H1 (cell line): ENCODE measurements at regions of chr1 and their contacts with region 1.

Region 1: DNA sequence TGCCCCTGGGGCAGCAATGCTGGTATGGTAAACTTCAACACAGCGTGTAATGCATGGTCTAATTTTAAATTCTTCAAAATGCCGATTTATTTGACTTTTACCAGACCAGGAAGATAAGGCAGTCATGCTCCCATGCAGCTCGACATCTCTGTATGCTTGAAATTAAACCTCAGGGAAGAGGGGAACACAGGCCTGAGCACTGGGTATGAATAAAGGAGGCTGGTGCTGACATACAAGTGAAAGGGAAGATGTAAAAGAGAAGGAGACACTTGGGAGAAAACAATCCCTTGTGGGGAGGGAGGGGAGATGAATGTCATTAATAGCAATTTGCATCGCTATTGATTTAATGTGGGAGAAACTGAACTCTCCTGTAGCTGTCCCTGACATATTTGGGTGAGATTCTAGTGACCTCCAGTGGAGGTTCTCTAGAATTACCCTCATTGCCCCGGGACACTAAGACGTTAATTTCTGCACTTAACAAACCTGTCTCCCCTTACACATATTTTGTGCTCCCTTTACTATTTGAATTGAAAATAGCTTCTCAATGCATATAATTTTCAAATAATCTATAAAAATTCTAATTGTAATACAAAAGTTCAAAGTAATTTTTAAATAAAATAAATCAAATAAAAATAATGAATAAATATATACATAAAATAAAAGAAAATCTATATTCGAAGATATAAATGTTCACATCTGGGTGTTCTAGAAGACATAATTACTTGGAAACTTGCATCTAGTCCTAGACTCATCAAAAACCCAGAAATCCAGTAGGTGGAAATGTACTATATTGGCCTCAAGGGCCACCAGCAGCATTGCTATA is 283.1 kb downstream of the LMX1A start:
- DNase-seq: no peak
- H3K4me3 ChIP-seq: no peak overlapping the region
- H3K27ac ChIP-seq: no peak overlapping the region
- H3K4me1 ChIP-seq: peaks cover 0 to 9% (median 4%) of the 10 kb centered on the region in 4 experiments; a peak in 3 of 7 replicates
- H3K27me3 ChIP-seq: no peaks in the 10 kb centered on the region; a peak in 1 of 7 replicates
- CTCF ChIP-seq: peak in 2 of 3 experiments; percentile 68 to 73; a peak in 3 of 4 replicates
- EP300 ChIP-seq: no peak
- POLR2A ChIP-seq: no peak
- RAD21 ChIP-seq: peak; percentile 93 to 95

Region 2: GRCh38 chr1:163410073-163410999 is 1663.1 kb before region 1 on chr1:
- CTCF ChIA-PET with region 1: interaction called, 15 read pairs
- POLR2A ChIA-PET with region 1: no interaction called
- DNase-seq: peak; percentile 65 to 83
- H3K4me3 ChIP-seq: peak overlapping the region in 1 of 4 experiments; percentile 39; a peak in 1 of 8 replicates
- H3K27ac ChIP-seq: no peak overlapping the region
- H3K4me1 ChIP-seq: peaks cover 2 to 11% (median 6%) of the 10 kb centered on the region in 4 experiments; a peak in 4 of 7 replicates
- H3K27me3 ChIP-seq: no peaks in the 10 kb centered on the region
- CTCF ChIP-seq: peak in 2 of 3 experiments; percentile 63 to 84; a peak in 3 of 4 replicates
- EP300 ChIP-seq: no peak
- POLR2A ChIP-seq: no peak
- RAD21 ChIP-seq: peak; percentile 89 to 91

Region 3: DNA sequence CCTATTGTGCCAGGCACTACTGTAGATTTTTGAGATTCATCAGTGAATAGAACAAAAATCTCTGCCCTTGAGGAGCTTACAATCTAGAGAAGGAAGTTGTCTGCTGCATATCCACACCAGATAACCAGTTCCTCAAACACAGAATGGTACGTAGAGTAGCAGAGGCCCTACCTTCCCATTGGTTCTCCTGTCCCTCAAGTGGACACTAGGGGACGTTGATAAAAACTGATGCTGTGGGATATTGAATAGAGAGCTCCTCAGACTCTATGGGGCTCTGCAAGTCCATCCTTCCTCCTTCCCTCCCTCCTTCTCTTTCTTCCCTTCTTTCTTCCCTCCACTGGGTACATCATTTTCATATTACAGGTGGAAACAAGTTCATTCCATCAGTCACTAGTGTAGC is 143.2 kb before region 1 on chr1:
- CTCF ChIA-PET with region 1: interaction called, 11 read pairs
- POLR2A ChIA-PET with region 1: no interaction called
- DNase-seq: no peak
- H3K4me3 ChIP-seq: no peak overlapping the region
- H3K27ac ChIP-seq: no peak overlapping the region
- H3K4me1 ChIP-seq: no peaks in the 10 kb centered on the region; a peak in 1 of 7 replicates
- H3K27me3 ChIP-seq: no peaks in the 10 kb centered on the region
- CTCF ChIP-seq: peak in 1 of 3 experiments; percentile 13; a peak in 1 of 4 replicates
- EP300 ChIP-seq: no peak
- POLR2A ChIP-seq: no peak
- RAD21 ChIP-seq: peak in 1 of 2 experiments; percentile 5; a peak in 2 of 4 replicates

Region 4: GRCh38 chr1:165025805-165026204 is 47.6 kb before region 1 on chr1:
- CTCF ChIA-PET with region 1: no interaction called
- POLR2A ChIA-PET with region 1: no interaction called
- DNase-seq: no peak
- H3K4me3 ChIP-seq: no peak overlapping the region
- H3K27ac ChIP-seq: no peak overlapping the region
- H3K4me1 ChIP-seq: no peaks in the 10 kb centered on the region
- H3K27me3 ChIP-seq: no peaks in the 10 kb centered on the region
- CTCF ChIP-seq: no peak
- EP300 ChIP-seq: no peak
- POLR2A ChIP-seq: no peak
- RAD21 ChIP-seq: no peak

Region 5: GRCh38 chr1:165063181-165063965 is 10.0 kb before region 1 on chr1:
- CTCF ChIA-PET with region 1: interaction called, 23 read pairs
- POLR2A ChIA-PET with region 1: no interaction called
- DNase-seq: no peak
- H3K4me3 ChIP-seq: no peak overlapping the region
- H3K27ac ChIP-seq: no peak overlapping the region
- H3K4me1 ChIP-seq: no peaks in the 10 kb centered on the region
- H3K27me3 ChIP-seq: peaks cover 3 to 33% (median 23%) of the 10 kb centered on the region in 4 experiments; a peak in 6 of 7 replicates
- CTCF ChIP-seq: no peak
- EP300 ChIP-seq: no peak
- POLR2A ChIP-seq: no peak
- RAD21 ChIP-seq: no peak

Region 6: GRCh38 chr1:165162671-165163241 is 89.4 kb after region 1 on chr1:
- CTCF ChIA-PET with region 1: no interaction called
- POLR2A ChIA-PET with region 1: no interaction called
- DNase-seq: peak in 1 of 2 experiments; percentile 49
- H3K4me3 ChIP-seq: no peak overlapping the region
- H3K27ac ChIP-seq: no peak overlapping the region
- H3K4me1 ChIP-seq: no peaks in the 10 kb centered on the region
- H3K27me3 ChIP-seq: no peaks in the 10 kb centered on the region; a peak in 1 of 7 replicates
- CTCF ChIP-seq: no peak
- EP300 ChIP-seq: no peak
- POLR2A ChIP-seq: no peak
- RAD21 ChIP-seq: no peak